ENCODE measurements at regions of chr18 and their contacts with region 1.

Region 1: GRCh38 chr18:49149011-49149410 is 198.2 kb upstream of the SMAD7 start:
- DNase-seq: no peak
- H3K4me3 ChIP-seq: no peak overlapping the region
- CTCF ChIP-seq: no peak

Region 2: DNA sequence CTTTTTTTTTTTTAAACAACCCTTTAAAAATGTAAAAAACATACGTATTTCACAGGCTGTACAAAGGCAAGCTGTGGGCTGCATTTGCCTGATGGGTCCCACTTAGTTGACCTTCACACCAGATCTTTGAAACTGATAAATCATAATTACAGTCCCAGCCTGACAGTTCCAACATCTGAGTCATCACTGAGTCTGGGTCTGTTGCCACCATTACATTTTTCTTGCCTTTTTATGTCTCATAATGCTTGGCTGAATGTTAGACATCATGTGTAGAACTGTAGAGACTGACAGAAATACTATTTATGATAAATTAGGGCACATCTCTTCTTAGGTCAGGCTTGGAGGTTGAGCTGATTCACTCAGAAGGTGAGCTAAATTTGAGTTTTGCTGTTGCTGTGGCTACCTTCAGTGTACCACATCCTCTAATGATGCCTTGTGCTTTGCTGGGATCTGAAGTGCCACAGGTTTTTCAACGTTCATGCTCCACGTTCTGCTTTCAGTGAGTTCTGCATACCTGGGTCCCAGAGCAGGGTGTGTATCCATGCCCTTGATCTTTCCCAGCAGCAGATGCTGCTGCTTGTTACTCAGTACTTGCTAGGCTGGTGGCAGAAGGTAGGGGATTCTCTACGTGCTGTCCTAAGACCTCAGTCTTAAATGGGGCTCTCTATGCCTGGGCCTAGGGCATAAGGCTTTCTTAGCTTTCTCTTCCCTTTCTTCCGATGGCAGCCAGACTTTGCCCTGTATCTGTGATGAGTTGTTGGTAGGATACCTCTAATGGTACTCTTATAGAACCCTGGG is 37.6 kb before region 1 on chr18:
- in situ Hi-C with region 1: loop called (anchors 5 kb)
- DNase-seq: no peak
- H3K4me3 ChIP-seq: no peak overlapping the region
- CTCF ChIP-seq: no peak

Region 3: DNA sequence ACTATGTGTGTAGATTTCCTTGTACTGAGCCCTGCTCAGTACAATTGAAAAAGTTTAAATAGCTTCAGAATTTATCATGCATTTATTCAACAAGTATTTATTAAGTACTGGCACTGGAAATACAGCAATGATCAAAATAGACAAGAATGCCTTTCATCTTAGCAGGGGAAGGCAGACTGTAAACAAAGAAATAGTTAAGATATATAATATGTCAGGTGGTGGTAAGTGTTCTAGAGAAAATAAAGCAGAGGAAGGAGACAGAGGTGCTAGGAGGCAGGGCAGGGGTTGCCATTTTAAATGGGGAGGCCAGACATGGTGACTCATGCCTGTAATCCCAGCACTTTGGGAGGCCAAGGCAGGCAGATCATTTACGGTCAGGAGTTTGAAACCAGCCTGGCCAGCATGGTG is 399.2 kb after region 1 on chr18:
- in situ Hi-C with region 1: no loop called
- DNase-seq: peak; percentile 64
- H3K4me3 ChIP-seq: no peak overlapping the region
- CTCF ChIP-seq: no peak

Measured in astrocyte of the cerebellum (primary cell).